ENCODE measurements at regions of chr2 and their contacts with region 1.

Region 1: DNA sequence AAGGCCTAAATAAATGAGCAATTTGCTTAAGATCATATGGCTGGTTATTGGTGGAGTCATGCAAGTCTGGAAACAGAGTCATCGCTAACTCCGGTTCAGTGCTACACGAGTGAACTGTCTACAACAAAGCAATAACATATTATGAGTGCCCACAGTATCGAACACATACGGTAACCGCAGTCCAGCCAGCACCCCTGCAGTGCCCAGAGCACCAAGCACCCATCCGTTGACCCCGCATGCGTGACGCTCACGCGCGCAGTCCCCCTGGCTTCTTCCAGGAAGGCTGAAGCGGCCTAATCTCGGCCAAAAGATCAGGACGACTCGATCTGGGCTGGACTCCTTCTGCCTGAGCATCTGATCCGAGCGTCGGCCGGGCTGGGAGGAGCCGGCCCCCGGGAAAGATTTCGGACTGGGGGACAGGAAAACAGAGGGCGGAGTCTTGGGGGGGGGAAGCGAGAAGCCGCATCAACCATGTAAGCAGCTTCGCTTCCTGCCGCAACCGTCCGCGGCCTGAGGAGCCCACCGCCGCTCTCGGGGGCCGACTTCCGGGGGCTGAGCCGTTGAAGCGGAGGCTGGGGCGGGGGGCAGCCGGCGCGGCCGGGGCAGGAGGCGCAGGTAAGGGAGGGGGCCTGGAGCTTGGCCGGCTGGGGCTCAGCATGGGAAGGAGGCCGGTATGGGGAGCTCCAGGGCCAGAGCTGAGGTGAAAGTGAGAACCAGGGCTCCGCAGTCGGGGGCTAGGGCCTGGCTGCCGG is at the start of gene PIKFYVE:
- DNase-seq: peak; percentile 94
- H3K4me3 Mint-ChIP-seq: peak within 1 kb of the TSS; percentile 95
- H3K27ac Mint-ChIP-seq: peak within 1 kb of the TSS; percentile 94
- H3K4me1 Mint-ChIP-seq: peaks cover 33% of the 10 kb centered on the region
- H3K27me3 Mint-ChIP-seq: no peaks in the 10 kb centered on the region
- total RNA-seq, gene PIKFYVE: 20.2 to 22.4 TPM

Region 2: GRCh38 chr2:207769597-207770486 is 496.1 kb before region 1 on chr2 and contains the start of gene FZD5:
- CTCF ChIA-PET with region 1: no interaction called
- intact Hi-C with region 1: loop called (anchors 2 kb)
- DNase-seq: peak; percentile 91
- H3K4me3 Mint-ChIP-seq: peak within 1 kb of the TSS; percentile 80
- H3K27ac Mint-ChIP-seq: no peak within 1 kb of the TSS
- H3K4me1 Mint-ChIP-seq: peaks cover 31% of the 10 kb centered on the region
- H3K27me3 Mint-ChIP-seq: peaks cover 36% of the 10 kb centered on the region
- total RNA-seq, gene FZD5: 1.5 to 1.7 TPM

Region 3: DNA sequence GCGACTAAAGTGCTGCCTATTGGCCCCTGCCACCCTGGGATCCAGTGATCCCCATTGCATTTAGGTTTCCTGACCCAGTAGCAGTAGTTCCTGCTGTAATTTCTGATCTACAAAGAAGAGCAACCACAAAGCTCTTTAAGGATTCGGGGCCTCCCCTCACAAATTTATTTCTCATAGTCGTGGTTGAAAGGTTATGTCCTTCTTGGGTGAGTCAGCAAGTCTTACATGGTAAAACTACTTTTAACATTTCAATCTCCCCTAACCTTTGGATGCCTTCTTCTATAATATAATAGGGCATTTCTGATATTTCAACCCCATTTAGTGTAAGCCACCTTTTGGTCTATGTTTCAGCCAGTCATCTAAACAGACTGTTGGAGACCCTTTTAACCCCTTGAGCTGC is 15.0 kb after region 1 on chr2:
- CTCF ChIA-PET with region 1: interaction called, 4 read pairs
- intact Hi-C with region 1: loop called (anchors 2 kb)
- DNase-seq: peak; percentile 17
- H3K4me3 Mint-ChIP-seq: no peak overlapping the region
- H3K27ac Mint-ChIP-seq: no peak overlapping the region
- H3K4me1 Mint-ChIP-seq: peaks cover 22% of the 10 kb centered on the region
- H3K27me3 Mint-ChIP-seq: no peaks in the 10 kb centered on the region

Region 4: GRCh38 chr2:208359632-208359986 is 93.6 kb after region 1 on chr2:
- CTCF ChIA-PET with region 1: no interaction called
- intact Hi-C with region 1: loop called (anchors 5 kb)
- DNase-seq: no peak
- H3K4me3 Mint-ChIP-seq: no peak overlapping the region
- H3K27ac Mint-ChIP-seq: no peak overlapping the region
- H3K4me1 Mint-ChIP-seq: peaks cover 2% of the 10 kb centered on the region
- H3K27me3 Mint-ChIP-seq: no peaks in the 10 kb centered on the region

Region 5: DNA sequence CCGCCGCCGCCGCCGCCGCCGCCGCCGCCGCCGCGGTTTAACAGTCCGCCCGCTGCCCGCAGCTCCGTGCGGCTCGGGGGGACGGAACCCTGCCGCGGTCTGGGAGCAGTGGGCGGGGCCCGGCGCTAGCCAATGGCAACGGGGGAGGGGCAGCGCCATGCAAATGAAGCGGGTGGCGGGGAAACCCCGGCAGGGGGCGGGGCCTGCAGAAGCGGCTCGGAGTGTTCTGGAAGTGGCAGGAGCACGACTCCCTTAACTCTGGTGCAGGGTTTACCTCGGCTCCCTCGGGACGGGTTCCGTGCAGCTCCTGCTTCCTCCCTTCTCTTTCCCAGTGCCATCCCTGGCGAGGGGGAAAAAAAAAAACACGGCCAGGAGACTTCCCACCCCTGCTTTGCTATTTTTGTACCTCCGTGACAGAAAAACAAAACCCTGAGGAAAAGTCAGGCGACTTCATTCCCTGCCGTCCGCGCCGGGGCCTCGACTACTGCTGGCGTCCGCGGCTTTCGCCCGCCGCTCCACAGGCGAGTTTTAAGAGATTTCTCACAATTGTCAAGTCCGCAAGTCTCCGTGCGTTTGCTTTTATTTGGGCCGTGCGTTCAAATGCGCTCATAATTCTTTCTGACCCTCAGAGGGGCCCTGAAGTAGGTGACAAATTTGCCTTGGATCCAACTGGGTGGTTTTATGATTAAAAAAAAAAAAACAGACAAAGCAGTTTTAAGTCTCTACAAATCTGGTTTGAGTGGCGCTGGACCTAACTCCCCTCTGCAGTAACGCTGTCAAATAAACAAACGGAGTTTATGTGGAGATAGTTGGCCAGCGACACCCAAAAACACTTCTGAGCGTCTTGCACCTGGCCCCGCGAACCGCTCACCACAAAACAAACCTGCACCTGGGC is 1905.6 kb after region 1 on chr2 and contains the start of gene KANSL1L:
- CTCF ChIA-PET with region 1: no interaction called
- intact Hi-C with region 1: loop called (anchors 1 kb)
- DNase-seq: peak; percentile 95
- H3K4me3 Mint-ChIP-seq: peak within 1 kb of the TSS; percentile 98
- H3K27ac Mint-ChIP-seq: peak within 1 kb of the TSS; percentile 96
- H3K4me1 Mint-ChIP-seq: peaks cover 20% of the 10 kb centered on the region
- H3K27me3 Mint-ChIP-seq: peaks cover 3% of the 10 kb centered on the region
- total RNA-seq, gene KANSL1L: 4.4 to 4.8 TPM

Measured in activated naive CD4-positive, alpha-beta T cell treated with anti-CD3 and anti-CD28 coated beads for 36 hours (primary cell).